Activated CD4-positive, alpha-beta memory T cell treated with anti-CD3 and anti-CD28 coated beads for 36 hours (primary cell): ENCODE measurements at regions of chr5 and their contacts with region 1.

Region 1: DNA sequence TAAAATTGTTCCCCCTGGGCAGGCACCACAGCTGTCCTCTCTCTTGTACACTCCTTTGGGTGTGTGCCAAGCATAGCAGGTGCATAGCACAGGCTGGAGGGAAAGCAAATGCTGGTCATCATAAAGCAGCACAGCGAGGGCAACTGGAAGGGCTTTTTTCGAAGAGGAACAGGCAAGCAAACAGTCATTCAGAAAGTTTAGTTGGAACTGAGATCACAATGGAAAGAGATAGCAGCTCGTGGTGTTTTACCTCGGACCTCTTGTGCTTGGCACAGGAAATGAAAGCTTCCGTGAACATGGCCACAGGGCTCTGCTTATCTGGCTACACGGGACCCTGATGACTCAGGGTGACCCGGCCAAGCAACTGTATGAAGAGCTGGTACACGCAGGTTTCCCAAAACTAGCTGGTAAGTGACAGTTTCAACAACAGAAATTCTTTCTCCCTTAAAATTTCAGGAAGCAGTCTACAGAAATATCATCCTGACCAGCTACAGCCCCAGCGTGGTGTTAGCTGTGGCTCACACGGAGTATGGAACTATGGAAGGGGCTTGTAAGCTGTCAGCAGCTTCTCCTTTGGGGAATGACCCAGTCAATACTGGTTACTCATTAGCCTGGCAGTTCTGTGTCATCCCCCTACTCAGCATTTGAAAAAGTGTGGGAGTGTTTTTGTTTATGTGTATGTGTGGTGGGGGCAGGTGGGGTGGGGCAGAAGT is 48.1 kb downstream of the POC5 start:
- DNase-seq: peak; percentile 87
- H3K4me3 Mint-ChIP-seq: peak overlapping the region; percentile 74
- H3K27ac Mint-ChIP-seq: peak overlapping the region; percentile 94
- H3K4me1 Mint-ChIP-seq: peaks cover 36% of the 10 kb centered on the region
- H3K27me3 Mint-ChIP-seq: no peaks in the 10 kb centered on the region

Region 2: GRCh38 chr5:74766849-74767578 is 902.1 kb before region 1 on chr5 and contains the starts of genes GFM2 and NSA2:
- CTCF ChIA-PET with region 1: no interaction called
- POLR2A ChIA-PET with region 1: no interaction called
- intact Hi-C with region 1: loop called (anchors 10 kb)
- DNase-seq: peak; percentile 96
- H3K4me3 Mint-ChIP-seq: peak within 1 kb of the TSS; percentile 100
- H3K27ac Mint-ChIP-seq: peak within 1 kb of the TSS; percentile 97
- H3K4me1 Mint-ChIP-seq: peaks cover 36% of the 10 kb centered on the region
- H3K27me3 Mint-ChIP-seq: no peaks in the 10 kb centered on the region
- total RNA-seq, gene GFM2: 30.9 to 33.0 TPM
- total RNA-seq, gene NSA2: 96.1 to 98.0 TPM

Region 3: GRCh38 chr5:75336625-75337339 is 332.4 kb before region 1 on chr5 and contains the start of gene HMGCR:
- CTCF ChIA-PET with region 1: no interaction called
- POLR2A ChIA-PET with region 1: interaction called, 4 read pairs
- intact Hi-C with region 1: loop called (anchors 2 kb)
- DNase-seq: peak; percentile 99
- H3K4me3 Mint-ChIP-seq: no peak within 1 kb of the TSS
- H3K27ac Mint-ChIP-seq: no peak within 1 kb of the TSS
- H3K4me1 Mint-ChIP-seq: peaks cover 35% of the 10 kb centered on the region
- H3K27me3 Mint-ChIP-seq: no peaks in the 10 kb centered on the region
- total RNA-seq, gene HMGCR: 57.7 to 68.6 TPM

Region 4: DNA sequence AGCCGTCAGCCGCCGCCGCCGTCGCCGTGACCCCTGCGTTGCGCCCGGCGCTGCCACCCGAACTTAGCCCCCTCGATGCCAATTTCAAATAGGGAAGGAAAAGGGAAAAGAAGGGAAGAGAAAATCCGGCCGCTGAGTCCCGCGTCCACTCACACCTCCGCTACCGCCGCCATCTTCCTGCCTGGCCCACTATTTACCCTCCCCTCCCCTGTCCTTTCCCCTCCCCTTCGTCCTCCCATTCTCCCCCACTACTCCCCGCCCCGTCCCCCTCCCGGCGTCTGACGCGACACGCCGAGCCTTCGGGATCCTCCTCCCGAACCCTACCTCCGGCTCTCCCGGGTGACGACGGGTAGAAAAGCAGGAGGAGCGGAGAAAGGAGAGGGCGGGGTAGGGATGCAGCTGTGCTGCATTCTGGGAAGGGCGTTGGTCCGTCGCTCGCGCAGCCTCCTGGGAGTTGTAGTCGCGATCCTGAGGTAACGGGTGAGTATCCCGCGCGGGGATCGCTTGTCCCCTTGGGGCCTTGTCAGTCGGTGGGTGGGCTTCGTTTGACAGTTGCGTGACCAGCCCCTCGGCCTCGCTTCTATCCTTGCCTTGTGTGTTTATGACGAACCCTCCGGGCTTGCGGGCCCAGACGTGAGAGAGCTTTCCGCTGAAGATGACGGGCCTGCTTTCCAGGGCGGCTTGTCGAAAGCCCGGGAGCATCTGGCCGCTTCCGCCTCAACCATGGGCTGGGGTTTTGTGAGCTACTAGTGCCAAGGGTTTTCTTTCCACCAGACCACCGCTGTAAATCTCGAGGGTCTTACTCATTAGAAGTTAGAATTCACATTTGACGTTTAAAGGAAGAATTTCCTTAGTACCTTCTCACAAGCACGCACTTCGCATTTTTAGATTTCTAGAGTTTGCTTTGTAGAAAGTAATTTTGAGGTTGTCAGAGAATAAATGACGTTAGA is 157.4 kb before region 1 on chr5 and contains the starts of genes CERT1 and POLK:
- CTCF ChIA-PET with region 1: interaction called, 5 read pairs
- POLR2A ChIA-PET with region 1: no interaction called
- intact Hi-C with region 1: loop called (anchors 1 kb)
- DNase-seq: peak; percentile 99
- H3K4me3 Mint-ChIP-seq: peak within 1 kb of the TSS; percentile 98
- H3K27ac Mint-ChIP-seq: peak within 1 kb of the TSS; percentile 96
- H3K4me1 Mint-ChIP-seq: peaks cover 55% of the 10 kb centered on the region
- H3K27me3 Mint-ChIP-seq: no peaks in the 10 kb centered on the region
- total RNA-seq, gene CERT1: 32.3 to 34.4 TPM
- total RNA-seq, gene POLK: 33.9 to 36.5 TPM

Region 5: DNA sequence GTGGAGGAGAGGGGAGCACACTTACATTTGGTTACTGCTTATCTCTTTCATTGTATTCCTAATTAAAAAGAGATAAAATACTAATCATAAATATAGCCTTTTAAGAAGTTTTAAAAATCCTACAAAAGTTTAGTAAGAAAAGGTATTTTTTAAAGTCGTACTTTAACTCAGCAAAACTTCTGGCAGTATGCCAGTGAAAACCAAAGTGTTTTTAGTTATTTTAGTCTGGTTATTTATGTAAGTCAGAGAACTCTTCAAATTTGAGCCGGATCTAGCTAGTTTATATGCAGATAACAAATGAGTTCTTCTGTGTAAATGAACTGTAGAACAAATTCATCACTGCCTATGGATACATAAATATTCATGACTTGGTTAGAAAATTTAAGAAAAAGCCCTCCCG is 94.3 kb before region 1 on chr5:
- CTCF ChIA-PET with region 1: interaction called, 6 read pairs
- POLR2A ChIA-PET with region 1: interaction called, 7 read pairs
- intact Hi-C with region 1: loop called (anchors 2 kb)
- DNase-seq: no peak
- H3K4me3 Mint-ChIP-seq: no peak overlapping the region
- H3K27ac Mint-ChIP-seq: peak overlapping the region; percentile 92
- H3K4me1 Mint-ChIP-seq: peaks cover 23% of the 10 kb centered on the region
- H3K27me3 Mint-ChIP-seq: no peaks in the 10 kb centered on the region

Region 6: GRCh38 chr5:75717082-75717922 is 48.2 kb after region 1 on chr5 and contains the start of gene POC5:
- CTCF ChIA-PET with region 1: no interaction called
- POLR2A ChIA-PET with region 1: interaction called, 9 read pairs
- intact Hi-C with region 1: loop called (anchors 1 kb)
- DNase-seq: peak; percentile 99
- H3K4me3 Mint-ChIP-seq: peak within 1 kb of the TSS; percentile 98
- H3K27ac Mint-ChIP-seq: peak within 1 kb of the TSS; percentile 99
- H3K4me1 Mint-ChIP-seq: peaks cover 28% of the 10 kb centered on the region
- H3K27me3 Mint-ChIP-seq: no peaks in the 10 kb centered on the region
- total RNA-seq, gene POC5: 20.7 to 21.8 TPM